PC-9 (cell line): ENCODE measurements at regions of chr12 and their contacts with region 1.

Region 1: DNA sequence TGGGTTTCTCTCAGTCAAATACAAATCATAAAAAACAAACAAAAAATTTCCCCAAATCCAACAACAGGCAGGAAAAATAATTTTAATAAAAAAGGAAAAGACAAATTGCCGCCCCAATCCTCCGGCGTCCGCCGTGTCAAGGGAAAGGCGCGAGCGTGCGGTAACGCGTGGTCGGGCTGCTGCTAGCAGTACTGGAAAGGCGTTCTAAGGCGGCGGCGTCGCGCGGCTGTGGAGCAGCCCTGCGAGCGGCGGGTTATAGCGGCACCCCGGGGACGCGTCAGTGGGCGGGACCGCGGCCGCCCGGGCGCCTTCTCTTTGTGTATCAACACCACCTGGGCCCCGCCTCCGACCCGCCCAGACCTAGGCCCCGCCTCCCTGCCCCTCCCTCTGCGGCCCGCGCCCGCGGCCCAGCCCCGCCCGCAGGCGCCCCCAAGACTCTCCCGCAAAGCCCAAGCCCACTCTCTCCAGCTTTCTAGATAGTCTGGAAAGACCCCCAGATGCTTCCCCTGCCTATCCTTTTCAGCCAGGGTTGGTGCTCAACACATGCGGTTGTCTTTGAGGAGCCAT is at the start of gene SLC38A2:
- DNase-seq: peak; percentile 70 to 94
- H3K4me3 ChIP-seq: peak within 1 kb of the TSS; percentile 94
- H3K27ac ChIP-seq: peak within 1 kb of the TSS; percentile 97
- H3K4me1 ChIP-seq: peaks cover 43% of the 10 kb centered on the region
- H3K27me3 ChIP-seq: no peaks in the 10 kb centered on the region
- CTCF ChIP-seq: no peak
- total RNA-seq, gene SLC38A2: 193 and 322 TPM in 2 replicates

Region 2: GRCh38 chr12:45290204-45290580 is 1082.4 kb before region 1 on chr12:
- CTCF ChIA-PET with region 1: no interaction called
- POLR2A ChIA-PET with region 1: interaction called, 11 read pairs
- intact Hi-C with region 1: no loop called
- DNase-seq: peak in 1 of 2 experiments; percentile 78
- H3K4me3 ChIP-seq: no peak overlapping the region
- H3K27ac ChIP-seq: no peak overlapping the region
- H3K4me1 ChIP-seq: peaks cover 28% of the 10 kb centered on the region
- H3K27me3 ChIP-seq: no peaks in the 10 kb centered on the region
- CTCF ChIP-seq: no peak

Region 3: DNA sequence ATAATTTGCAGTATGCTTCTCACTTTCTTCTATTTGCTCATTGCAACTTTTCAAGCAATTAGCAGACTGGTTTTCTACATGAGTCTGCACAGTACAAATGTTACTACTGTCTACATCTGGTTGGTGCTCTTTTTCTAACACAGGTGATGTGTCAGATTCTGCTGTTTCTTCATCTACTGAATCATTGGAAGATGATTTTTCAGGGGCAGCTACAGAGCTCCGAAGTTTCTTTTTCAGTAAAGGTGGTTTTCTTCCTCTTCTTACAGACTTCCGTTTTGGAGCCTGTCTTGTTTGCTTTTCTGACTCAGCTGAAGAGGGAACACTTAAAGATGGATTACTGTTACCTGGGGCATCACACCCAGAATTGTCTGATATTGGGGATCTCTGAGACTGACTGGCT is 444.3 kb before region 1 on chr12:
- CTCF ChIA-PET with region 1: no interaction called
- POLR2A ChIA-PET with region 1: no interaction called
- intact Hi-C with region 1: no loop called
- DNase-seq: no peak
- H3K4me3 ChIP-seq: no peak overlapping the region
- H3K27ac ChIP-seq: no peak overlapping the region
- H3K4me1 ChIP-seq: no peaks in the 10 kb centered on the region
- H3K27me3 ChIP-seq: no peaks in the 10 kb centered on the region
- CTCF ChIP-seq: no peak

Region 4: GRCh38 chr12:46153268-46153872 is 219.3 kb before region 1 on chr12:
- CTCF ChIA-PET with region 1: no interaction called
- POLR2A ChIA-PET with region 1: no interaction called
- intact Hi-C with region 1: loop called (anchors 2 kb)
- DNase-seq: peak in 1 of 2 experiments; percentile 35
- H3K4me3 ChIP-seq: no peak overlapping the region
- H3K27ac ChIP-seq: no peak overlapping the region
- H3K4me1 ChIP-seq: peaks cover 19% of the 10 kb centered on the region
- H3K27me3 ChIP-seq: no peaks in the 10 kb centered on the region
- CTCF ChIP-seq: peak; percentile 77

Region 5: GRCh38 chr12:46276756-46277155 is 95.9 kb before region 1 on chr12:
- CTCF ChIA-PET with region 1: no interaction called
- POLR2A ChIA-PET with region 1: no interaction called
- intact Hi-C with region 1: no loop called
- DNase-seq: no peak
- H3K4me3 ChIP-seq: no peak overlapping the region
- H3K27ac ChIP-seq: no peak overlapping the region
- H3K4me1 ChIP-seq: no peaks in the 10 kb centered on the region
- H3K27me3 ChIP-seq: no peaks in the 10 kb centered on the region
- CTCF ChIP-seq: no peak

Region 6: GRCh38 chr12:46430340-46430948 is 57.8 kb after region 1 on chr12:
- CTCF ChIA-PET with region 1: no interaction called
- POLR2A ChIA-PET with region 1: no interaction called
- intact Hi-C with region 1: loop called (anchors 1 kb)
- DNase-seq: peak; percentile 28 to 98
- H3K4me3 ChIP-seq: peak overlapping the region; percentile 34; the same call in 1 of the 2 replicates
- H3K27ac ChIP-seq: peak overlapping the region; percentile 95
- H3K4me1 ChIP-seq: peaks cover 41% of the 10 kb centered on the region
- H3K27me3 ChIP-seq: no peaks in the 10 kb centered on the region
- CTCF ChIP-seq: no peak

Region 7: DNA sequence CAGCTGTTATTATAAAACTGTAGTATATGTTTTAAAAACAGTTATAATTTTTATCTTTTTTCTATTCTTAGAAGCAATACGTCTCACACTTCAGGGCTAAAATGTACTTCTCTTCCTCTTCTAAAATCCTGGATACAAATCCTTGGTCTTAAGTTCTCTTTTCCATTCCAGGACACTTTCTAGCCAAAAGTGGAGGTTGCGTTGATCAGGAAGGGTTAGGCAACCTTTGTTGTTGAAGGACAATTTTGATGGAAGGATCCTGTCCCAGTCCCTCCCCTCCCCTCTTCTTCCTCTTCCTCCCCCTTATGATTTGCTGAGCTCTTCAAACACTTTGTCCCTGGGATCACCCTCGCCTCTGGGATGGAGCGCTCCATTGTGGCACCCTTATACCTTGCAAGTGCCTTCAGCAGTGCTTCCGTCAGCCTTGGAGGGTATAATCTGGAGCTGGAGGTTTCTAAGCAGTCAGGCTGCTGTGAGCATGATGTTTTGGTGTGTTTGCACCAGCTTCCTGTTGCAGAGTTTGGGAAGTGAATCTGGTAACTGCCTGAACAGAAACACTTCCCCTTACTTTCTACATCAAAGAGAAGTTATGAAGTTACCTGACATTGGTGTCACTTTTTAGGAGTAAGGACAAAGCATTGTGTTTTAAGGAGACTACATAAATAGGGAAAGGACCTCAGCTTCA is 87.4 kb after region 1 on chr12:
- CTCF ChIA-PET with region 1: no interaction called
- POLR2A ChIA-PET with region 1: no interaction called
- intact Hi-C with region 1: no loop called
- DNase-seq: no peak
- H3K4me3 ChIP-seq: no peak overlapping the region
- H3K27ac ChIP-seq: no peak overlapping the region
- H3K4me1 ChIP-seq: peaks cover 36% of the 10 kb centered on the region
- H3K27me3 ChIP-seq: no peaks in the 10 kb centered on the region
- CTCF ChIP-seq: no peak

Region 8: GRCh38 chr12:47276621-47277309 is 904.1 kb after region 1 on chr12:
- CTCF ChIA-PET with region 1: no interaction called
- POLR2A ChIA-PET with region 1: no interaction called
- intact Hi-C with region 1: loop called (anchors 10 kb)
- DNase-seq: peak; percentile 64 to 80
- H3K4me3 ChIP-seq: peak overlapping the region; percentile 1; the same call in 1 of the 2 replicates
- H3K27ac ChIP-seq: peak overlapping the region; percentile 93
- H3K4me1 ChIP-seq: peaks cover 76% of the 10 kb centered on the region
- H3K27me3 ChIP-seq: no peaks in the 10 kb centered on the region
- CTCF ChIP-seq: no peak

Region 9: GRCh38 chr12:47433876-47434275 is 1061.2 kb after region 1 on chr12:
- CTCF ChIA-PET with region 1: no interaction called
- POLR2A ChIA-PET with region 1: no interaction called
- intact Hi-C with region 1: no loop called
- DNase-seq: no peak
- H3K4me3 ChIP-seq: no peak overlapping the region
- H3K27ac ChIP-seq: no peak overlapping the region
- H3K4me1 ChIP-seq: no peaks in the 10 kb centered on the region
- H3K27me3 ChIP-seq: no peaks in the 10 kb centered on the region
- CTCF ChIP-seq: no peak